ENCODE measurements at regions of chr16 and their contacts with region 1.

Region 1: GRCh38 chr16:27367461-27368357 is 34.3 kb upstream of the IL21R start:
- DNase-seq: peak; percentile 95
- ATAC-seq: peak; percentile 74
- H3K4me3 Mint-ChIP-seq: peak overlapping the region; percentile 58
- H3K27ac Mint-ChIP-seq: peak overlapping the region; percentile 98
- H3K4me1 Mint-ChIP-seq: peaks cover 79% of the 10 kb centered on the region
- H3K27me3 Mint-ChIP-seq: no peaks in the 10 kb centered on the region

Region 2: GRCh38 chr16:27154705-27155521 is 212.8 kb before region 1 on chr16:
- CTCF ChIA-PET with region 1: interaction called, 12 read pairs
- POLR2A ChIA-PET with region 1: no interaction called
- intact Hi-C with region 1: loop called (anchors 1 kb)
- DNase-seq: peak; percentile 86
- ATAC-seq: peak; percentile 87
- H3K4me3 Mint-ChIP-seq: no peak overlapping the region
- H3K27ac Mint-ChIP-seq: no peak overlapping the region
- H3K4me1 Mint-ChIP-seq: peaks cover 9% of the 10 kb centered on the region
- H3K27me3 Mint-ChIP-seq: no peaks in the 10 kb centered on the region

Region 3: GRCh38 chr16:27245276-27246172 is 122.2 kb before region 1 on chr16:
- CTCF ChIA-PET with region 1: interaction called, 5 read pairs
- POLR2A ChIA-PET with region 1: interaction called, 6 read pairs
- intact Hi-C with region 1: loop called in 1 of 2 experiments (anchors 1 kb)
- DNase-seq: peak; percentile 78
- ATAC-seq: peak; percentile 89
- H3K4me3 Mint-ChIP-seq: peak overlapping the region; percentile 18
- H3K27ac Mint-ChIP-seq: peak overlapping the region; percentile 93
- H3K4me1 Mint-ChIP-seq: peaks cover 86% of the 10 kb centered on the region
- H3K27me3 Mint-ChIP-seq: no peaks in the 10 kb centered on the region

Region 4: DNA sequence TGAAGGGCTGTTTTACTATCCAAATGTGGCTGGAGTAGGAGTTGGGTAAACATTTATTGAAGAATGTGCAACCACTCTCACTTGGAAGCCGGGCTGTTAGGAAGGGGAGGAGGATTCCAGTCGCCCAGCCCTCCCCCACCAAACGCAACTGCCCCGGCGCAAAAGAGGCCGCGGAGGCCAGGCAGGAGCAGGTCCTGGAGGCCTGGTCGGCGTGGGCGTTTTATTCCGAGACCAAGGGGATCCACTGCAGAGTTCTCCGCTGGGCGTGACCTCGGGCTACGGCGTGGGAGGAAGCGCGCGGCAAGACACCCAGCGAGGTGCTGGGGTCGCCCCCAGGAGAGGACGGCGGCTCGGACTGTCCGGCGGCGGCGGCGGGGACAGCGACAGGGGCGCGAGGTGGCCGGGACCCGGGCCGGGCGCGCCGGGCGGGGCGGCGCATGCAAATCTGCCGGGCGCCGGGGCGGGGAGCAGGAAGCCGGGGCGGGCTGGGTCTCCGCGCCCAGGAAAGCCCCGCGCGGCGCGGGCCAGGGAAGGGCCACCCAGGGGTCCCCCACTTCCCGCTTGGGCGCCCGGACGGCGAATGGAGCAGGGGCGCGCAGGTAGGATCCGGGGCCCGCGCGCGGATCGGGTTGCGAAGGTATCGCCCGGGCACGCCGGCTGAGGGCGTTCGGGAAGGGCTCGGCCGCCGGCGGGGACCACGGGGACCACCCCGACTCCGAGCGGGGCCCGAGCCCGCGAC is 54.1 kb before region 1 on chr16 and contains the start of gene IL4R:
- CTCF ChIA-PET with region 1: interaction called, 14 read pairs
- POLR2A ChIA-PET with region 1: interaction called, 66 read pairs
- intact Hi-C with region 1: loop called (anchors 1 kb)
- DNase-seq: peak; percentile 87
- ATAC-seq: no peak
- H3K4me3 Mint-ChIP-seq: peak within 1 kb of the TSS; percentile 90
- H3K27ac Mint-ChIP-seq: peak within 1 kb of the TSS; percentile 97
- H3K4me1 Mint-ChIP-seq: peaks cover 44% of the 10 kb centered on the region
- H3K27me3 Mint-ChIP-seq: no peaks in the 10 kb centered on the region
- total RNA-seq, gene IL4R: 185 to 229 TPM

Region 5: GRCh38 chr16:27401768-27402568 is 34.3 kb after region 1 on chr16 and contains the start of gene IL21R:
- CTCF ChIA-PET with region 1: interaction called, 47 read pairs
- POLR2A ChIA-PET with region 1: interaction called, 103 read pairs
- intact Hi-C with region 1: loop called (anchors 1 to 2 kb)
- DNase-seq: peak; percentile 94
- ATAC-seq: peak; percentile 60
- H3K4me3 Mint-ChIP-seq: peak within 1 kb of the TSS; percentile 99
- H3K27ac Mint-ChIP-seq: peak within 1 kb of the TSS; percentile 97
- H3K4me1 Mint-ChIP-seq: peaks cover 38% of the 10 kb centered on the region
- H3K27me3 Mint-ChIP-seq: no peaks in the 10 kb centered on the region
- total RNA-seq, gene IL21R: 61.8 to 73.5 TPM

Region 6: GRCh38 chr16:27461483-27462171 is 93.9 kb after region 1 on chr16:
- CTCF ChIA-PET with region 1: interaction called, 3 read pairs
- POLR2A ChIA-PET with region 1: no interaction called
- intact Hi-C with region 1: loop called (anchors 1 to 2 kb)
- DNase-seq: no peak
- ATAC-seq: no peak
- H3K4me3 Mint-ChIP-seq: no peak overlapping the region
- H3K27ac Mint-ChIP-seq: no peak overlapping the region
- H3K4me1 Mint-ChIP-seq: peaks cover 21% of the 10 kb centered on the region
- H3K27me3 Mint-ChIP-seq: no peaks in the 10 kb centered on the region

Region 7: GRCh38 chr16:27475561-27475960 is 107.9 kb after region 1 on chr16:
- CTCF ChIA-PET with region 1: no interaction called
- POLR2A ChIA-PET with region 1: no interaction called
- intact Hi-C with region 1: no loop called
- DNase-seq: no peak
- ATAC-seq: no peak
- H3K4me3 Mint-ChIP-seq: no peak overlapping the region
- H3K27ac Mint-ChIP-seq: no peak overlapping the region
- H3K4me1 Mint-ChIP-seq: no peaks in the 10 kb centered on the region
- H3K27me3 Mint-ChIP-seq: no peaks in the 10 kb centered on the region

Measured in activated CD4-positive, alpha-beta T cell treated with anti-CD3 and anti-CD28 coated beads for 36 hours (primary cell).